WTC11 (cell line): ENCODE measurements at regions of chr5 and their contacts with region 1.

Region 1: DNA sequence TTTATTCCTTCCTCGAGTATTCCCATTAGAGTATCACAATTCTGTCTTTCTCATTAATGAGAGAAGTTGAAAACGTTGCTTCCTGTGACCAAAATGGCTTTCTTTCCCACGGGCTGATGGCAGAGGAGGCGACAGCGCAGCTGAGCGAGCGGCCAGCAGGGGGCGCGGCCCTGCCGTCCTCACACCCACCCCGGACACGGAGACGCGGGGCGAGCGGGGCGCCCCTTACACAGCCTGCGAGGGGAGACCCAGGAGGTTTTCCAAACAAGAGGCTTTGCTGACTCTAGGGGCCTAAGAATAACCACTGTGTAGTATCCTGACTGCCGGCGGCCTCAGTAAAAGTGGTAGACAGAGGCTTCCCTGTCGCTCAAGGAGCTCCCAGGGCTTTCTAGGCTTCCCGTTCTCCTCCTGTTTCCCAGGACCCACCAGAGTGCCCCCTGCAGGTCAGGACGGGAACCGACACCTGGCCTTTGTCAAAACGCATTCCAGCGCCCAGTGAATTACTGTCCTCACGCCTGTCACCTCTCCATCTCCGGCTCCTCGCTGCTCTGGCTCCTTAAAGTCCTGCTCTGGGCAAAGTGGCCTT is 27.3 kb upstream of the FGF1 start:
- DNase-seq: peak; percentile 96
- ATAC-seq: peak; percentile 58
- H3K4me3 Mint-ChIP-seq: peak overlapping the region; percentile 51
- H3K27ac Mint-ChIP-seq: peak overlapping the region; percentile 57; the same call in 1 of the 2 replicates
- H3K4me1 Mint-ChIP-seq: peaks cover 55% of the 10 kb centered on the region
- H3K27me3 Mint-ChIP-seq: peaks cover 3% of the 10 kb centered on the region; the same call in 1 of the 2 replicates
- CTCF ChIP-seq: peak; percentile 99

Region 2: GRCh38 chr5:142408981-142409481 is 304.2 kb before region 1 on chr5:
- CTCF ChIA-PET with region 1: no interaction called
- POLR2A ChIA-PET with region 1: no interaction called
- DNase-seq: no peak
- ATAC-seq: peak; percentile 54
- H3K4me3 Mint-ChIP-seq: no peak overlapping the region
- H3K27ac Mint-ChIP-seq: no peak overlapping the region
- H3K4me1 Mint-ChIP-seq: peaks cover 34% of the 10 kb centered on the region
- H3K27me3 Mint-ChIP-seq: no peaks in the 10 kb centered on the region
- CTCF ChIP-seq: no peak

Region 3: GRCh38 chr5:142655339-142656267 is 57.6 kb before region 1 on chr5:
- CTCF ChIA-PET with region 1: interaction called, 70 read pairs
- POLR2A ChIA-PET with region 1: no interaction called
- DNase-seq: peak; percentile 88
- ATAC-seq: peak; percentile 90
- H3K4me3 Mint-ChIP-seq: no peak overlapping the region
- H3K27ac Mint-ChIP-seq: no peak overlapping the region
- H3K4me1 Mint-ChIP-seq: peaks cover 14% of the 10 kb centered on the region
- H3K27me3 Mint-ChIP-seq: no peaks in the 10 kb centered on the region
- CTCF ChIP-seq: peak; percentile 93

Region 4: DNA sequence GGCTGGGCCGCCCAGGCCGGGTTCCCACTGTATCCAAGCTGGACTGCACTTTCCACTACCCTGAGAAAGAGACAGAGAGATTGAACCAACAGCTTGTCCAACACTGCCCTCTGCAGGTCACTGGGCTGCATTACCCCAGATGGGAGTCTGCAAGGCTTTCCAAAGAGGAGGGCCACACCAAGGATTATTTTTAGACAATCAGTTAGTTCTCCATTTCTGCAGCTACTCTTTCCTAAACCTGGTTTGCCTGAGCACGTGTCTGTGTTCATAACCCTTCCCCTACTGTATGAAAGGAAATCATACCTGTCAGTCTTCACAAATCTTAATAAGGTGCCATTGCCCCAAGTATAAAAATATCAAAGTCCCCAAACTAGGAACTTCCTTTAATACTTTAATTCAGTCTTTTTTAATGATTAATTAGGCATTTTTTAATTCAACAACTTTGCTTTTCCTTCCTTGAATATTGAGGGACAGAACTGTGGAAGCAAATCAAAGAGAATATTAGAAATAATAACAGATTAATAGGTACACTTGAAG is 14.0 kb before region 1 on chr5:
- CTCF ChIA-PET with region 1: interaction called, 102 read pairs
- POLR2A ChIA-PET with region 1: interaction called, 3 read pairs
- DNase-seq: peak; percentile 94
- ATAC-seq: peak; percentile 75
- H3K4me3 Mint-ChIP-seq: no peak overlapping the region
- H3K27ac Mint-ChIP-seq: no peak overlapping the region
- H3K4me1 Mint-ChIP-seq: peaks cover 59% of the 10 kb centered on the region
- H3K27me3 Mint-ChIP-seq: no peaks in the 10 kb centered on the region
- CTCF ChIP-seq: peak; percentile 90

Region 5: GRCh38 chr5:142769741-142770631 is 56.8 kb after region 1 on chr5 and contains the start of gene ARHGAP26:
- CTCF ChIA-PET with region 1: interaction called, 32 read pairs
- POLR2A ChIA-PET with region 1: no interaction called
- DNase-seq: peak; percentile 98
- ATAC-seq: peak; percentile 96
- H3K4me3 Mint-ChIP-seq: peak within 1 kb of the TSS; percentile 93
- H3K27ac Mint-ChIP-seq: peak within 1 kb of the TSS; percentile 90
- H3K4me1 Mint-ChIP-seq: peaks cover 36% of the 10 kb centered on the region
- H3K27me3 Mint-ChIP-seq: peaks cover 12% of the 10 kb centered on the region; the same call in 1 of the 2 replicates
- CTCF ChIP-seq: no peak
- total RNA-seq, gene ARHGAP26: 19.1 to 22.3 TPM (median 21.8 TPM) in 3 replicates

Region 6: GRCh38 chr5:142874537-142874936 is 161.3 kb after region 1 on chr5:
- CTCF ChIA-PET with region 1: interaction called, 70 read pairs
- POLR2A ChIA-PET with region 1: no interaction called
- DNase-seq: no peak
- ATAC-seq: no peak
- H3K4me3 Mint-ChIP-seq: no peak overlapping the region
- H3K27ac Mint-ChIP-seq: no peak overlapping the region
- H3K4me1 Mint-ChIP-seq: peaks cover 47% of the 10 kb centered on the region
- H3K27me3 Mint-ChIP-seq: no peaks in the 10 kb centered on the region
- CTCF ChIP-seq: no peak

Region 7: GRCh38 chr5:142922223-142922952 is 209.2 kb after region 1 on chr5:
- CTCF ChIA-PET with region 1: interaction called, 33 read pairs
- POLR2A ChIA-PET with region 1: no interaction called
- DNase-seq: no peak
- ATAC-seq: peak; percentile 43; the same call in 1 of the 2 replicates
- H3K4me3 Mint-ChIP-seq: no peak overlapping the region
- H3K27ac Mint-ChIP-seq: no peak overlapping the region
- H3K4me1 Mint-ChIP-seq: peaks cover 17% of the 10 kb centered on the region
- H3K27me3 Mint-ChIP-seq: no peaks in the 10 kb centered on the region
- CTCF ChIP-seq: no peak

Region 8: GRCh38 chr5:143054480-143054941 is 341.3 kb after region 1 on chr5:
- CTCF ChIA-PET with region 1: no interaction called
- POLR2A ChIA-PET with region 1: no interaction called
- DNase-seq: no peak
- ATAC-seq: no peak
- H3K4me3 Mint-ChIP-seq: no peak overlapping the region
- H3K27ac Mint-ChIP-seq: no peak overlapping the region
- H3K4me1 Mint-ChIP-seq: peaks cover 43% of the 10 kb centered on the region
- H3K27me3 Mint-ChIP-seq: no peaks in the 10 kb centered on the region
- CTCF ChIP-seq: no peak